ENCODE measurements at regions of chr14 and their contacts with region 1.

Region 1: DNA sequence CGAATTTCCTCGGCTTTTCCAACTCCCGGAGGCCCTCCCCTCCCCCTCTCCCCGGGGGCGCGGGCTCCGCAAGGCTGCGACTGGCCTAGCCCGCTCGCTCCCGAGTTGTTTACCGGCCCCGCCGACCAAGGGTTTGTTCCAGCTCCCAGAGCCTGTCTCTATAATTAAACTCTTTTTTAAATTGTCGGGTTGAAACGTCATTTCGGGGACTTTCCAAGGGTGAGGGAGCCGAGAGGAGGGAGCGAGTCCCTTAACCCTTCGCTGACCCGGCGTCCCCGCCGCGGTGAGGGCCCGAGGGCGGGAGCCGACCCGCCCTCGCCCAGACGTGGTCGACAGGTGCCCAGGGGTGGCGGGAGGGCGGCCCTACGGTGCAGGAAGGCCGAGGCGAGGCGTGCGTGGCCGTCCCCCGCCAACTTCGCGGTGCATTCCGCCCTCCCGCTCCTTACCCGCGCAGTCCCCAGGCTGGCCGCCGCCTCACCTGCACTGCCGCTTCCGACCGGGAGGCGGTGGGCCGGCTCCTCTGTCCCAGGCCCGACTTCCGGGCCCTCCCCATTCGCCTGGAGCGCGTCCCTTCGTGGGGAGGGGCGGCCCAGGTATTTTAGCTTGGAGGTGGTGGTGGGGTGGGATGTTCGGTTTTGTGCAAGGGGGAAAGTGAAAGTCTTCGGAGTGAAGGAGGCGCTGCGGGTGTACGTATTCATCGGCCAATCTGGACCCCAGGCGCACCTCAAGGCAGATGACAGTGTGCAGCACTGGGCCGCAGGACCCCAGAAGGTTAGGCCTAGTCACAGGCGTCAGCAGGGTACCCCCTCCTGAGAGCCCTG is 2.9 kb upstream of the ZFP36L1 start:
- DNase-seq: peak; percentile 72 to 90
- H3K4me3 ChIP-seq: peak overlapping the region; percentile 95
- H3K27ac ChIP-seq: peak overlapping the region; percentile 98
- H3K4me1 ChIP-seq: peaks cover 24% of the 10 kb centered on the region
- H3K27me3 ChIP-seq: no peaks in the 10 kb centered on the region
- CTCF ChIP-seq: peak; percentile 82

Region 2: GRCh38 chr14:68137704-68138619 is 657.8 kb before region 1 on chr14:
- CTCF ChIA-PET with region 1: no interaction called
- POLR2A ChIA-PET with region 1: interaction called, 5 read pairs
- intact Hi-C with region 1: loop called (anchors 2 kb)
- DNase-seq: peak; percentile 88 to 92
- H3K4me3 ChIP-seq: no peak overlapping the region
- H3K27ac ChIP-seq: peak overlapping the region; percentile 57
- H3K4me1 ChIP-seq: peaks cover 58% of the 10 kb centered on the region
- H3K27me3 ChIP-seq: no peaks in the 10 kb centered on the region
- CTCF ChIP-seq: no peak

Region 3: DNA sequence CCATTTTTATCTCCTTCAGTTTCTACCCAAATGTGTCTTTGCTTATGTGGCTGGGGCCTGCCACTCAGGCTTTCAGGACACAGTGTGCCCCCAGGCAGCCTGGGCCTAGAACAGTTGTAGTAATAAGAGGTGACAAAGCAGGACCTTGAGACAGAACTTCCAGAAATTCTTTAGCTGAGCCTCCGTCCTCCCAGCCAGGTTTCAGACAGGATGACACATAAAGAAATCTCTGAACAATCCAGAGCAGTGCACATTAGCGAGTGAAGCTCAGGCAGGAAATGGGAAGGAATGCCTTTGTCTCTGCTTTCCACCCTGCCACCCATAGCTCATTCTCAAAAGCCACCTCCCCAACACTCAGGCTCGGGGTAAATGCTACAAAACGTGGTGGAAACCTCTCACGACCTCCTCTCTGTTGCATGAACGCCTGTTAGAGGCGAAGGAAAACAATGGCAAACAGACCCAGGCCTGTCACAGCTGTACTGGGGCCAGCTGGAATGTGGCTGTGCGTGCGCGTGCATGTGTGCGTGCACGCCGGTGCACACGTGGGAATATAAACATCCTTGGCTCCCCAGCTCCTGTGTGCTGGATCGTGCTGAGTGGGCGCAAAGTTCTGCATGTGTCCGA is 289.7 kb before region 1 on chr14:
- CTCF ChIA-PET with region 1: no interaction called
- POLR2A ChIA-PET with region 1: no interaction called
- intact Hi-C with region 1: loop called (anchors 5 kb)
- DNase-seq: peak; percentile 52 to 58
- H3K4me3 ChIP-seq: no peak overlapping the region
- H3K27ac ChIP-seq: no peak overlapping the region
- H3K4me1 ChIP-seq: peaks cover 18% of the 10 kb centered on the region; the same call in 1 of the 2 replicates
- H3K27me3 ChIP-seq: no peaks in the 10 kb centered on the region
- CTCF ChIP-seq: no peak

Region 4: DNA sequence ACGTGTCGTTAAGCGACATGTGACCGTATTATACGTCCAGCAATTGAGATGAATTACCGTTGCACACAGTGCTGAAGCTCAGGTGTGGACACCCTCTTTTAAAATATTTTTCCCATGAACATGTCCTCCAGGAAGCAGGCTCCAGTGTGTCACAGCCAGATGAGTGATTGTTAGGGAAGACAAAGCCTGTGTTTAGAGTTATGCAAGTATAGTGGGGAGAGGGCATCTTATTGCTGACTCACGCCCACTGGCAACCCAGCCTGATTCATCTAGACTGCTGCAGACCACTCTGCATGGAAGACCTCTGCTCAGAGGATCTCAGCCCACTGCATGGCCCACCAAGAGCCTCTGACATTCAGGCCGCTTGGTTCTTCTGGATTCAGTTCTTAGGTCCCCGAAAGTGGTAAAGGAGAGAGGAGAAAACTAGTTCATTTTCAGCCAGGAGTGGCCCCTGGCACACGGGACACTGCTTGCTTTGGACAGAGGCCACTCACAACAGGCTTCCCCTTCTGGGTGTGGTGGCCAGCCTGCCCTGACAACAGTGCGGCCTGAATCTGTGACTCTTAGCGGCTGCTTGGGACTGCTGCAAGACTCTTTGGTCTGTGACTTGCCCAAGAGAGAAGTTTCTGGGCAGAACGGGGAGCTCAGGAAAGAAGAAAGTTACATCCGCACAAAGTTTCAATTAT is 269.2 kb before region 1 on chr14:
- CTCF ChIA-PET with region 1: no interaction called
- POLR2A ChIA-PET with region 1: interaction called, 23 read pairs
- intact Hi-C with region 1: loop called (anchors 2 kb)
- DNase-seq: peak; percentile 71 to 74
- H3K4me3 ChIP-seq: no peak overlapping the region
- H3K27ac ChIP-seq: peak overlapping the region; percentile 87
- H3K4me1 ChIP-seq: peaks cover 45% of the 10 kb centered on the region
- H3K27me3 ChIP-seq: no peaks in the 10 kb centered on the region
- CTCF ChIP-seq: no peak

Region 5: GRCh38 chr14:68816262-68816942 is 20.6 kb after region 1 on chr14:
- CTCF ChIA-PET with region 1: no interaction called
- POLR2A ChIA-PET with region 1: interaction called, 7 read pairs
- intact Hi-C with region 1: loop called (anchors 1 kb)
- DNase-seq: peak; percentile 69 to 92
- H3K4me3 ChIP-seq: peak overlapping the region; percentile 57
- H3K27ac ChIP-seq: peak overlapping the region; percentile 81
- H3K4me1 ChIP-seq: peaks cover 50% of the 10 kb centered on the region
- H3K27me3 ChIP-seq: no peaks in the 10 kb centered on the region
- CTCF ChIP-seq: peak; percentile 98

Region 6: GRCh38 chr14:69657950-69658355 is 862.1 kb after region 1 on chr14:
- CTCF ChIA-PET with region 1: interaction called, 17 read pairs
- POLR2A ChIA-PET with region 1: no interaction called
- intact Hi-C with region 1: no loop called
- DNase-seq: peak; percentile 84 to 98
- H3K4me3 ChIP-seq: peak overlapping the region; percentile 22; the same call in 1 of the 2 replicates
- H3K27ac ChIP-seq: peak overlapping the region; percentile 90
- H3K4me1 ChIP-seq: peaks cover 89% of the 10 kb centered on the region
- H3K27me3 ChIP-seq: no peaks in the 10 kb centered on the region
- CTCF ChIP-seq: no peak

Measured in PC-9 (cell line).